ENCODE measurements at regions of chr16 and their contacts with region 1.

Region 1: GRCh38 chr16:56964243-56965148 is 2.7 kb downstream of the CETP start:
- DNase-seq: peak; percentile 89 to 92 (median 92)
- H3K4me3 ChIP-seq: no peak overlapping the region
- H3K4me3 Mint-ChIP-seq: peak overlapping the region in 1 of 8 donors; percentile 69
- H3K27ac ChIP-seq: no peak overlapping the region
- H3K27ac Mint-ChIP-seq: peak overlapping the region in 3 of 7 donors; percentile 12 to 94 (median 83)
- H3K4me1 ChIP-seq: peaks cover 19% of the 10 kb centered on the region
- H3K4me1 Mint-ChIP-seq: peaks cover 11 to 22% (median 17%) of the 10 kb centered on the region in 4 donors
- H3K27me3 ChIP-seq: no peaks in the 10 kb centered on the region
- H3K27me3 Mint-ChIP-seq: no peaks in the 10 kb centered on the region

Region 2: GRCh38 chr16:56931892-56932720 is 32.4 kb before region 1 on chr16 and contains the start of gene HERPUD1:
- CTCF ChIA-PET with region 1: interaction called, 4 read pairs
- POLR2A ChIA-PET with region 1: interaction called, 14 read pairs
- intact Hi-C with region 1: loop called (anchors 1 kb)
- DNase-seq: peak; percentile 98 to 99 (median 99)
- H3K4me3 ChIP-seq: peak within 1 kb of the TSS; percentile 51 to 83
- H3K4me3 Mint-ChIP-seq: peak within 1 kb of the TSS; percentile 95 to 99 (median 98)
- H3K27ac ChIP-seq: peak within 1 kb of the TSS; percentile 96
- H3K27ac Mint-ChIP-seq: peak within 1 kb of the TSS; percentile 95 to 99 (median 98)
- H3K4me1 ChIP-seq: peaks cover 48% of the 10 kb centered on the region
- H3K4me1 Mint-ChIP-seq: peaks cover 23 to 52% (median 37%) of the 10 kb centered on the region in 4 donors
- H3K27me3 ChIP-seq: no peaks in the 10 kb centered on the region
- H3K27me3 Mint-ChIP-seq: no peaks in the 10 kb centered on the region
- total RNA-seq, gene HERPUD1: 130 to 136 TPM

Region 3: GRCh38 chr16:56988948-56989945 is 24.8 kb after region 1 on chr16 and contains the start of gene NLRC5:
- CTCF ChIA-PET with region 1: interaction called, 81 read pairs
- POLR2A ChIA-PET with region 1: interaction called, 26 read pairs
- intact Hi-C with region 1: loop called (anchors 1 kb)
- DNase-seq: peak; percentile 85 to 94 (median 89)
- H3K4me3 ChIP-seq: peak within 1 kb of the TSS; percentile 85 to 91
- H3K4me3 Mint-ChIP-seq: peak within 1 kb of the TSS; percentile 94 to 100 (median 99)
- H3K27ac ChIP-seq: peak within 1 kb of the TSS; percentile 97
- H3K27ac Mint-ChIP-seq: peak within 1 kb of the TSS; percentile 89 to 100 (median 98)
- H3K4me1 ChIP-seq: peaks cover 72% of the 10 kb centered on the region
- H3K4me1 Mint-ChIP-seq: peaks cover 50 to 96% (median 64%) of the 10 kb centered on the region in 4 donors
- H3K27me3 ChIP-seq: no peaks in the 10 kb centered on the region
- H3K27me3 Mint-ChIP-seq: no peaks in the 10 kb centered on the region
- total RNA-seq, gene NLRC5: 416 to 457 TPM

Region 4: DNA sequence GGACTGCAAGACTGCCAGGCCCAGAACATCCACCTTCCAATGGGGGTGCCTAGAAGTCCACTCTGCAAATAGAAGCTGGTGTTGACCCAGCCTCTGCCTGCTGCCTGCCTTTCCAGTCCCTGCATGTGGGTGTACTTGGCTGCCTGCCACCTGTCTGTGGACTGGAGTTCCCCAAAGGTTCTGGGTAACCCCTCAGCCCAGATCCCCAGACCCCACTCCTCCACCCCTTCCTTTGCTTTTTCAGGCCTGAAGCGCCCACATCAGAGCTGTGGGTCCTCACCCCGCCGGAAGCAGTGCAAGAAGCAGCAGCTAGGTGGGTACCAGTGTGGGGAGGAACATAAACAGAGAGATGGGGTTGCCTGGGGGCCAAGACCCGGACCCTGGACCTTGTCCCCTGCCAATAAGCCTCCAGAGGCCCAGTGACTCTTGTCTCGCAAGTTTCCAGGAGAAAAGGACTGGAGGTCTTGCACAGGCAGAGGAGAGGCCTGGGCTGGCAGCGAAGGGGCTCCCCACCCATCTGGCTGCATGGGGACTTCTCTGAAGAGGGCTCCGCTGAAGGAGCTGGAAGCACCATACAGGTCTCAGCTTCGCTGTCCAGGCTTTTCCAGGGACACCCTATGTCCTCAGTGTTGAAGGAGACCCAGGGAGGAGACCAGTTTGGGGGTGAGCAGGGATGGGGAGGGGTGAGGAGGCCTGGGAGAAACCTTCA is 59.2 kb after region 1 on chr16:
- CTCF ChIA-PET with region 1: interaction called, 35 read pairs
- POLR2A ChIA-PET with region 1: interaction called, 3 read pairs
- intact Hi-C with region 1: no loop called
- DNase-seq: peak; percentile 77 to 91 (median 83)
- H3K4me3 ChIP-seq: peak overlapping the region; percentile 5 to 11
- H3K4me3 Mint-ChIP-seq: peak overlapping the region in 7 of 8 donors; percentile 54 to 84 (median 73)
- H3K27ac ChIP-seq: peak overlapping the region; percentile 58
- H3K27ac Mint-ChIP-seq: peak overlapping the region; percentile 87 to 94 (median 90)
- H3K4me1 ChIP-seq: peaks cover 92% of the 10 kb centered on the region
- H3K4me1 Mint-ChIP-seq: peaks cover 66 to 99% (median 82%) of the 10 kb centered on the region in 4 donors
- H3K27me3 ChIP-seq: no peaks in the 10 kb centered on the region
- H3K27me3 Mint-ChIP-seq: no peaks in the 10 kb centered on the region

Region 5: GRCh38 chr16:57039148-57039812 is 74.8 kb after region 1 on chr16:
- CTCF ChIA-PET with region 1: interaction called, 78 read pairs
- POLR2A ChIA-PET with region 1: interaction called, 41 read pairs
- intact Hi-C with region 1: loop called (anchors 1 kb)
- DNase-seq: peak in 3 of 5 donors; percentile 20 to 34 (median 24)
- H3K4me3 ChIP-seq: peak overlapping the region in 1 of 2 donors; percentile 6
- H3K4me3 Mint-ChIP-seq: peak overlapping the region; percentile 32 to 90 (median 76)
- H3K27ac ChIP-seq: peak overlapping the region; percentile 73
- H3K27ac Mint-ChIP-seq: peak overlapping the region; percentile 88 to 98 (median 94)
- H3K4me1 ChIP-seq: peaks cover 95% of the 10 kb centered on the region
- H3K4me1 Mint-ChIP-seq: peaks cover 63 to 95% (median 81%) of the 10 kb centered on the region in 4 donors
- H3K27me3 ChIP-seq: no peaks in the 10 kb centered on the region
- H3K27me3 Mint-ChIP-seq: no peaks in the 10 kb centered on the region

Region 6: GRCh38 chr16:57066625-57067024 is 102.1 kb after region 1 on chr16:
- CTCF ChIA-PET with region 1: interaction called, 27 read pairs
- POLR2A ChIA-PET with region 1: no interaction called
- intact Hi-C with region 1: no loop called
- DNase-seq: no peak
- H3K4me3 ChIP-seq: no peak overlapping the region
- H3K4me3 Mint-ChIP-seq: peak overlapping the region in 1 of 8 donors; percentile 48
- H3K27ac ChIP-seq: no peak overlapping the region
- H3K27ac Mint-ChIP-seq: peak overlapping the region in 6 of 7 donors; percentile 66 to 90 (median 79)
- H3K4me1 ChIP-seq: peaks cover 4% of the 10 kb centered on the region
- H3K4me1 Mint-ChIP-seq: peaks cover 2 to 10% (median 6%) of the 10 kb centered on the region in 4 donors
- H3K27me3 ChIP-seq: no peaks in the 10 kb centered on the region
- H3K27me3 Mint-ChIP-seq: no peaks in the 10 kb centered on the region

Region 7: DNA sequence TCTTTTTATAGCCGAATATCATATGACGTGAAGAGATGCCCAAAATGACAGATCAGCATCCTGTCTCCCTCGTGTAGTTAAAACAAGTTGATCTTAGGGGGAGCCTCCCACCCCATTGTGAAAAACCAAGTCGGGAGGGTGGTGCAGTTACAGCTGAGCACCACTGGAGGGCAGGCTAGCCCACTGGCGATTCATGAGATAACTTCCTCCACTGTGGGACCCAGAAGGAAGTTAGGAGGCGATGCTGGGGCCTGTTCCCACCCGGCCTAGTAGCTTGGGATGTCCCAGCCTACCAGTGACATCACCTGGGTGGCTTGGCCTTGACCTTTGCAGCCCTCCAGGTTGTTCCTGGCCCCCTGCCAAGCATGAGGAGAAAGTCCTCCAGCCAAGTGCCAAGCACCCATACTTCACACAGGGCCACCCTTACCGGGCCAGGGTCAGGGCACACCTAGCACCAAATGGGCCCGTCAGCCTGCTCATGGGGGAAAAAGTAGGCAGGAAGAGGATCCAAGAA is 119.8 kb after region 1 on chr16:
- CTCF ChIA-PET with region 1: interaction called, 81 read pairs
- POLR2A ChIA-PET with region 1: interaction called, 10 read pairs
- intact Hi-C with region 1: loop called (anchors 2 kb)
- DNase-seq: peak; percentile 78 to 81 (median 79)
- H3K4me3 ChIP-seq: no peak overlapping the region
- H3K4me3 Mint-ChIP-seq: peak overlapping the region in 1 of 8 donors; percentile 30
- H3K27ac ChIP-seq: peak overlapping the region; percentile 29
- H3K27ac Mint-ChIP-seq: peak overlapping the region; percentile 85 to 95 (median 91)
- H3K4me1 ChIP-seq: peaks cover 10% of the 10 kb centered on the region
- H3K4me1 Mint-ChIP-seq: peaks cover 5 to 18% (median 11%) of the 10 kb centered on the region in 4 donors
- H3K27me3 ChIP-seq: no peaks in the 10 kb centered on the region
- H3K27me3 Mint-ChIP-seq: no peaks in the 10 kb centered on the region

Region 8: DNA sequence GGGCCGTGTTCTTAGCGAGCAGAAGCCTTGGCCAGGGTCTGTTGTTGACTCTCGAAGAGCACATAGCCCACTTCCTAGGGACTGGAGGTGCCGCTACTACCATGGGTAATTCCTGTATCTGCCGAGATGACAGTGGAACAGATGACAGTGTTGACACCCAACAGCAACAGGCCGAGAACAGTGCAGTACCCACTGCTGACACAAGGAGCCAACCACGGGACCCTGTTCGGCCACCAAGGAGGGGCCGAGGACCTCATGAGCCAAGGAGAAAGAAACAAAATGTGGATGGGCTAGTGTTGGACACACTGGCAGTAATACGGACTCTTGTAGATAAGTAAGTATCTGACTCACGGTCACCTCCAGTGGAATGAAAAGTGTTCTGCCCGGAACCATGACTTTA is 240.2 kb after region 1 on chr16:
- CTCF ChIA-PET with region 1: no interaction called
- POLR2A ChIA-PET with region 1: no interaction called
- intact Hi-C with region 1: no loop called
- DNase-seq: no peak
- H3K4me3 ChIP-seq: no peak overlapping the region
- H3K4me3 Mint-ChIP-seq: no peak overlapping the region
- H3K27ac ChIP-seq: no peak overlapping the region
- H3K27ac Mint-ChIP-seq: no peak overlapping the region
- H3K4me1 ChIP-seq: no peaks in the 10 kb centered on the region
- H3K4me1 Mint-ChIP-seq: peaks cover 0 to 7% (median 5%) of the 10 kb centered on the region in 4 donors
- H3K27me3 ChIP-seq: no peaks in the 10 kb centered on the region
- H3K27me3 Mint-ChIP-seq: no peaks in the 10 kb centered on the region

Measured in CD4-positive, alpha-beta memory T cell (primary cell).